A549 (cell line): ENCODE measurements at regions of chr19 and their contacts with region 1.

Region 1: DNA sequence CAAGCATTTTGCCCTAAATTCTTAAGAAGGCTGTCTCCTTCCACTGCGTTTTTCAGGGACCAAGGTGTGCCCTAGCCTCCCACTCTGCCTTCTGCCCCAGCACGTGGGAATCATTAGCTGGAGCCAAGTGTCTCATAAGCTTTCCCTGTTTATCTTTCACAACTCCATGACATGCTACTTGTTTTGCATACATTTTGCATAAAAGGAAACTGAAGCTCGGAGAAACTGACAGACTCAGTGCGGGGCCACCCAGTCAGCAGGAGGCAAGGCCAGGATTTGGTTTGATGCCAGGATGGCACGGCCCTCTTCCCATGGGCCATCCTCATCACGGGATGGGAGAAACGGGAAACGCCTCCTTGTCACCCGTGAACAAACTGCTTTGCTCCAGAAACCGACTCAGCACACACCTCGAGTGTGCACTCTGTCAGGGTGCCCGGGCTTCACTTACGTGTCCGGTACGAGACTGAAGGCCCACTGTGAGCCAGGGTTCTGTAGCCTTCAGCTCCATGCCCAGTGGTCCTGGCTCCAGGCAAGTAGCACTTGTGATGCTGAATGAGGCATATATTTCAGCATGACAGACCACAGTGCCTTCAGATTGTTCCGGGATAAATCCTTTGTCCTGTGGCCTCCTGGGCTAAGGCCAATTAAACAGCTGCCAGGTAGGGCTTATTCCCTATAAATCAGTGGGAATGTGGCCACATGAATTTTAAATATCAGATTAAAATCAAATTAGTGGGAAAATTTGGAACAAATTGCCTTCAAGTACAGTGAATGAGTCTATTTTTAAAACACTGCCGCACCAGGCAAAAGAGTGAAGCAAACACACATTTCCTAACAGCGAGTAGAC is 9.5 kb downstream of the CEBPA start:
- DNase-seq: peak in 1 of 2 experiments; percentile 41
- ATAC-seq: peak; percentile 36 to 45
- H3K4me3 ChIP-seq: no peak overlapping the region
- H3K27ac ChIP-seq: peak overlapping the region; percentile 70 to 84
- H3K4me1 ChIP-seq: peaks cover 42% of the 10 kb centered on the region
- CTCF ChIP-seq: no peak; the same call in 1 of the 3 replicates
- EP300 ChIP-seq: no peak
- POLR2A ChIP-seq: no peak
- RAD21 ChIP-seq: no peak

Region 2: DNA sequence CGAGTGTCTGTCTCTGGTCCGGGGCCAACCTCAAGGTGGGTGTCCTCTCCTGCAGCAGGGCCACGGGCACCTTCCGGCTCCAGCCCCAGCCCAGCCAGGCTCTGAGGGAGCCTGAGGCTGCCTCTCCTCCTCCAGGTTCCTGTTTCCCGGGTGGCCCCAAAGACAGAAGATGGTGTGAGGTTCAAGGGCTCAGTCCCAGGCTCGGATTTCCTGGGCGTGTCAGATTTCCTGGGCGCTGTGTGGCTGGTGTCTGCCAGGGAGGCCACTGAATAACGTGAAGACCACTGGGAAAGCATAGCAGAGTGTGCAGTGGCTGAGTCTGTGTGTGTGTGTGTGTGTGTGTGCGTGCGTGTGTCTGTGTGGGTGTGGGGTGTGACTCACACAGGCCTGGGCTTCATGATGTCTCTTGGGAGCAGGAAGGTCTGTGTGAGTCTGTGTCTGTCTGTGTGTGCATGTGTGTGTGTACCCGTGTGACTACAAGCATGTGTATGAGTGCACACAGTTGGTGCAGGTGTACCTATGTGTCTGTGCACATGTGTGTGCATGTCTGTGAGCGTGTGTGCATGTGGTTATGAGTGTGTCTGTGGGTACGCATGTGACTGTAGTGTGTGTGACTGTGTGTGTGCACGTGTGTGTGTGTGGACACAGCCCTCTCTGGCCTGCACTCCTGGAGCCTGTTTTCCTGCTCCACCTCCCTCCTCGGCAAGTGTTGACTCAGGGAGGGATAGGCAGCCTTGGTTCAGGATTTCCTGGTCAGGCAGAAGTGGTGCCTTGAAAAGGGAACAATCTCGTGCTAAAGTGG is 18.7 kb before region 1 on chr19:
- CTCF ChIA-PET with region 1: interaction called, 18 read pairs
- POLR2A ChIA-PET with region 1: no interaction called
- DNase-seq: peak in 1 of 2 experiments; percentile 80
- ATAC-seq: peak; percentile 42 to 66
- H3K4me3 ChIP-seq: no peak overlapping the region
- H3K27ac ChIP-seq: peak overlapping the region; percentile 43 to 76
- H3K4me1 ChIP-seq: peaks cover 29% of the 10 kb centered on the region
- CTCF ChIP-seq: no peak
- EP300 ChIP-seq: no peak
- POLR2A ChIP-seq: no peak
- RAD21 ChIP-seq: no peak

Region 3: DNA sequence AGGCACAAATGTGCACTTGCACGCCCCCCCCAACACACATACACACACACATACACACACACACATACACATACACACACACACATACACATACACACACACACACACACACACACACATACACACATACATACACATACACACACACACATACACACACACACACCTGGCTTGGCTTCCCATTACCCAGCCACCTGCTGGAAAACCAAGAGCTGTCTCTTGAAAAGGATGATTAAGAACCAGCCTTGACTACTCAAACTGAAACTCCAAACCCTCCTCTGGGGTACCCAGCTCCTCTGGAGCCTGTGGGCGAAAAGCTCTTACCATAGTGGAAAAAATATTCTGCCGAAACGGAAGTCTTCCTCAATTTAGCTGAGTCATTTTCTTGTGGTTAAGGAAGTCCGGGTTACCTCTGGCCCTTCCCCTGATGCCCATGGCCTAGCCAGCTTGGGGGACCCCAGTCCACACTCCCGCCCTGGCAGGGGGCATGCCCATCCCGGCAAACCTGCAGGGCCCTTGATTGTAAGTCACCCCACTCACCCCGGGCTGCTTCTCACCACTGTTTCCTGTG is 12.4 kb before region 1 on chr19:
- CTCF ChIA-PET with region 1: interaction called, 18 read pairs
- POLR2A ChIA-PET with region 1: no interaction called
- DNase-seq: no peak
- ATAC-seq: no peak
- H3K4me3 ChIP-seq: no peak overlapping the region
- H3K27ac ChIP-seq: peak overlapping the region; percentile 40 to 70; a peak in 4 of 6 replicates
- H3K4me1 ChIP-seq: peaks cover 14% of the 10 kb centered on the region
- CTCF ChIP-seq: no peak
- EP300 ChIP-seq: no peak
- POLR2A ChIP-seq: no peak
- RAD21 ChIP-seq: no peak